Activated B cell treated with CpG ODN at 0.5 μM for 24 hours (primary cell): ENCODE measurements at regions of chr7 and their contacts with region 1.

Region 1: DNA sequence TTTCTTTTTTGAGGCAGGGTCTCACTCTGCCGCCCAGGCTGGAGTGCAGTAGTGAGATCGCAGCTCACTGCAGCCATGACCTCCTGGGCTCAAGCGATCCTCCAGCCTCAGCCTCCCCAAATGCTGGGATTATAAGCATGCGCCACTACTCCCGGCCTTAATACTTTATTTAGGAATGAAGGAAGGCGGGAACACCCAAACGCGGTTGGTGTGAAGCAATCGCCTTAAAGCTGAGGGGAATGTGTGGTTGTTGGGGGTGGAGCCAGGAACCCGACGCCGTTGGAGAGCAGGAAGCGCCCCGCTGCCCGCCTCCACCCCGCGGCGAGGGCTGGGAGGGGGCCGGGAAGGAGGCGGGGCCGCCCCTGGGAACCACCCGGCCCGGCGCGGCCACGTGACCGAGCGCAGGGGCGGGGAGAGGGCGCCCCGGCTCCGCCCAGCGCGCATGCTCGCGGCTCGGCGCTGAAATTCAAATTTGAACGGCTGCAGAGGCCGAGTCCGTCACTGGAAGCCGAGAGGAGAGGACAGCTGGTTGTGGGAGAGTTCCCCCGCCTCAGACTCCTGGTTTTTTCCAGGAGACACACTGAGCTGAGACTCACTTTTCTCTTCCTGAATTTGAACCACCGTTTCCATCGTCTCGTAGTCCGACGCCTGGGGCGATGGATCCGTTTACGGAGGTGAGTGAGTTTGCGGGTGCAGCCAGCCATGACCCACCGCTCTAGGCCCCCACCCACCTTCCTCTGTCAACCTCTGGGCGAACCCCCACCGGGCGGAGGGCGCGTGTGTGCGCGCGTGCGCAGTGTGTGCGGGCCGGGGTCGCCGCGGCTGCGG is at the start of gene ANLN:
- DNase-seq: peak; percentile 86
- ATAC-seq: peak; percentile 98
- H3K4me3 Mint-ChIP-seq: peak within 1 kb of the TSS; percentile 76
- H3K27ac Mint-ChIP-seq: peak within 1 kb of the TSS; percentile 56
- H3K4me1 Mint-ChIP-seq: peaks cover 25% of the 10 kb centered on the region
- H3K27me3 Mint-ChIP-seq: peaks cover 7% of the 10 kb centered on the region
- CTCF ChIP-seq: no peak
- total RNA-seq, gene ANLN: 0.29 and 0.73 TPM in 2 replicates

Region 2: DNA sequence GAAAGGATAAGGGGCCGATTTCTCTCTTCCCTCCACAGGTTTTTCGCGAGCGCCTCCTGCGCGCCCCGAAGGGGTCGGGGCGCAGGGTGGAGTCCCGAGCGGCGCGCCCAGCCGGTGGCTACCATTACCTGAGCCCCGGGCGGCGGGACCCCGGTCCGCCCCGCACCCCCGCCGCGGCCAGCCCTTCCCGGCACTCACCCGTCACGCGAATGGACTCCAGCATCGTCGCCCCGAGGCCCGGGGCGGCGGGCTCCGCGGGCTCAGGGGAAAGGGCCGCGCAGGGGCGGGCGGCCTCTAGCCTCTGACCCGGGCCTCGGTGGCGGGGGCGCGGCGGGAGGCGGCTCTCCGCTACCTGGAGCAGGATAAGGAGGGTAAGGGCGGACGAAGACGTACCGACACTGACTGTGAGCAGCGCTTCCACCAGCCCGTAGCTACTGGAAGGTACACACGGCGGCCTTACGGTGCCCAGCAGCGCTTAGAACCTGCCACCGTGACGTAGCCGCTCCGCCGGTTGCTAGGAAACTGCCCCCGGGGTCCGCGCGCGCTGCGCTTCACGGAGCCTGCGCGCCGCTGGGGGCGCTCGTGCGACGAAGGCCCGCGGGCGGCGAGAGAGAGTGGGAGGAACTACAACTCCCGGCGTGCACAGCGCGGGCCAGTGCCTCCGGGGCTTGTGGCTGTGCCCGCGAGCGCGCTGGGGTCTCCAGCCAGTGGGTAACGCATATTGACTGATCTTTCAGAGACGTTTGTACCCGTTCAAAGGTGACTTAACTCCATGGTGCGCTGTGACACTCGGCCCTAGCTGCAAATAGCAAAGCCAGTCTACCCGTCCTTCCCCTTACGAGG is 22.6 kb before region 1 on chr7:
- CTCF ChIA-PET with region 1: interaction called, 6 read pairs
- POLR2A ChIA-PET with region 1: interaction called, 4 read pairs
- intact Hi-C with region 1: loop called (anchors 1 kb)
- DNase-seq: peak; percentile 93
- ATAC-seq: peak; percentile 98
- H3K4me3 Mint-ChIP-seq: peak overlapping the region; percentile 92
- H3K27ac Mint-ChIP-seq: peak overlapping the region; percentile 30
- H3K4me1 Mint-ChIP-seq: peaks cover 5% of the 10 kb centered on the region
- H3K27me3 Mint-ChIP-seq: peaks cover 6% of the 10 kb centered on the region
- CTCF ChIP-seq: no peak